SK-N-SH (cell line): ENCODE measurements at regions of chr14 and their contacts with region 1.

Region 1: GRCh38 chr14:30270200-30271161 is 288.5 kb upstream of the G2E3 start:
- DNase-seq: peak; percentile 54
- H3K4me3 ChIP-seq: peak overlapping the region; percentile 23 to 29; a peak in 2 of 4 replicates
- H3K27ac ChIP-seq: no peak overlapping the region
- H3K4me1 ChIP-seq: no peaks in the 10 kb centered on the region; a peak in 1 of 4 replicates
- H3K27me3 ChIP-seq: peaks cover 30% of the 10 kb centered on the region; the same call in 1 of the 2 replicates
- CTCF ChIP-seq: peak; percentile 87
- EP300 ChIP-seq: no peak
- RAD21 ChIP-seq: peak; percentile 57

Region 2: DNA sequence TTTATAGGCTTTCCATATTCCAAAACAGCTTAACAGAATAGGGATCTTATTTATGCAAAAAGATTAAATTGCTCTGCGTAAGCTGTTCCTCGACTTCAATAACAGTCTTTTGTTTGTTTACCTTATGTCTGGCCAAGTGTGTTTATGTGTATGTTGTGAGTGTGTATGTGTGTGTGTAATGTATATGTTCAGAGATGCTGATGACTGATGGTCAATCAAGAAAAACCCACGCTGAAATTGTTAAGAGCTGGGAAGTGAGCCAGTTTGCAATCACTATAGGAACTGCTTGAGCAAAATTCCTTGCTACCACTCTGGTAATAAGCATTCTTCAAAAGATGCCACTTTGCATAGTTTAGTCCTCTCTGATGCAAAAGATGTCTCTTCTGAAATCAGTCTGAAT is 402.5 kb before region 1 on chr14:
- CTCF ChIA-PET with region 1: no interaction called
- POLR2A ChIA-PET with region 1: no interaction called
- DNase-seq: no peak
- H3K4me3 ChIP-seq: no peak overlapping the region
- H3K27ac ChIP-seq: no peak overlapping the region
- H3K4me1 ChIP-seq: no peaks in the 10 kb centered on the region
- H3K27me3 ChIP-seq: no peaks in the 10 kb centered on the region
- CTCF ChIP-seq: no peak
- EP300 ChIP-seq: no peak
- RAD21 ChIP-seq: no peak

Region 3: DNA sequence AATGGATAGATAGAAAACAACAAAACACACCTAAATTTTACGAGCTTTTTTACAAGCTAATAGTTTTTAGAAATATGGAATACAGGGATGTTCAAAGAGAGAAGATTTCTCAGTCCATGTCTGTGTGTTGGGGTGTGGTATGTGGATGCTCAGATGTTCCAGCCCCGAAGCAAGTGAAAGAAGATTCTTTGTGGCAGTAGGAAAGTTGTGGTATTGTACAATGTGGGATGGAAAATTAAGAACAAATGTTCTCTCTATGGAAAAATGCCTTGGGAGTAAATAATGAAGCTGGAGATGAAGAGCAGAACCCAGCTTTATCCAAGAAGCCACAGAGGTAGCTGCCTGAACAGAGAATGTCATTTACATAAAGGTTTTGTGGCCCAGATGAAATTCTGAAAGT is 192.5 kb before region 1 on chr14:
- CTCF ChIA-PET with region 1: no interaction called
- POLR2A ChIA-PET with region 1: no interaction called
- DNase-seq: no peak
- H3K4me3 ChIP-seq: no peak overlapping the region
- H3K27ac ChIP-seq: no peak overlapping the region
- H3K4me1 ChIP-seq: no peaks in the 10 kb centered on the region
- H3K27me3 ChIP-seq: no peaks in the 10 kb centered on the region; the same call in 1 of the 2 replicates
- CTCF ChIP-seq: no peak
- EP300 ChIP-seq: no peak
- RAD21 ChIP-seq: no peak

Region 4: DNA sequence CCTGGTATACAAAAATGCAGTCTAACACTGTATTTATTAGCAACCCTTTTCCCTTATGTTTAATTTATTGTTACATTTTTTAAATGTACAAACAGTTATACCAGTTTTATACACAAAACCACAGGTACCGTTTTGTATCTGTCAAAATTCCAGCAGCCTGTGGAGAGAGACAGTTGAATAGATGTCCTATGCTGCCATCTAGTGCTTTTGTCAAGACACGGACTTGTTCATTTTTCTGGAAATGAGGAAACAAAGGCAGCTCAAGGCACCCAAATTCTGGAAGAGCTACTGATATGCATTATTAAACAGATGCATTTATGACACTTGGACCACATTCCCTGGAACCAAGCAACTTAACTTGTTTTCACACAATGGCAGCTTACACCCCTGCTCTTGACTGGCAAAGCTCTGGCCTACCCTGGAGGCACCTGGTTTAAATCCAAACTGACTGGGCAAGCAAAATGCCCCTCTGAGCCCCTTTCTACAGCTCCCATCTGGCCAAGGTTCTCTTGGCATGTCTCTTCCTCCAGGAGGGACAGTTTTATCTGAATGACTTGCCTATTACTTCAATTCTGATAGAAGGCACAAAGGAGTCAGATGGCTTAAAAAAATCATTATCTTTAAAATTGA is 55.9 kb before region 1 on chr14:
- CTCF ChIA-PET with region 1: interaction called, 11 read pairs
- POLR2A ChIA-PET with region 1: no interaction called
- DNase-seq: peak; percentile 3
- H3K4me3 ChIP-seq: no peak overlapping the region
- H3K27ac ChIP-seq: no peak overlapping the region
- H3K4me1 ChIP-seq: 0 out of 4 replicates have a peak, but pooled peaks cover 0 to 5% of the 10 kb centered on the region in 2 experiments
- H3K27me3 ChIP-seq: peaks cover 9% of the 10 kb centered on the region; the same call in 1 of the 2 replicates
- CTCF ChIP-seq: peak; percentile 84
- EP300 ChIP-seq: no peak
- RAD21 ChIP-seq: peak; percentile 85

Region 5: DNA sequence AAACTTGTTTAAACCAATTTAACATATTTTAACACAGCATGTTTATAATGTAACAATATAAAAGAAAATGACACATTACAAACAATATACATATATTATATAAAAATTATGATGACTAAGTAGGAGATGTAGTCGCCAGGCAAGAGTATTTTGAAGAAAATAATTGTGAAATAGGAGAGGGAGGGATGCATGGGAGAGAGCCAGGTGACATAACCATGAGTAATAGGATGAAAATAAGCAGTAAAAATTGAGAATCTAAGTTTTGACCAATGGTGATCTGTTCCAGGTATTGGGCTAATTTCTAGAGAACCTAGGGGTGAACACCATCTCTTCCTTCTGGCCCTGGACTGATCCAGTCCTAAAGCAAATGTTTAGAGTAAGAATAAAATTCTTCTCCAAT is 26.7 kb before region 1 on chr14:
- CTCF ChIA-PET with region 1: interaction called, 11 read pairs
- POLR2A ChIA-PET with region 1: no interaction called
- DNase-seq: no peak
- H3K4me3 ChIP-seq: no peak overlapping the region
- H3K27ac ChIP-seq: no peak overlapping the region
- H3K4me1 ChIP-seq: no peaks in the 10 kb centered on the region
- H3K27me3 ChIP-seq: no peaks in the 10 kb centered on the region; the same call in 1 of the 2 replicates
- CTCF ChIP-seq: no peak
- EP300 ChIP-seq: no peak
- RAD21 ChIP-seq: no peak

Region 6: GRCh38 chr14:30252783-30253674 is 17.5 kb before region 1 on chr14:
- CTCF ChIA-PET with region 1: interaction called, 42 read pairs
- POLR2A ChIA-PET with region 1: no interaction called
- DNase-seq: no peak
- H3K4me3 ChIP-seq: no peak overlapping the region
- H3K27ac ChIP-seq: no peak overlapping the region
- H3K4me1 ChIP-seq: no peaks in the 10 kb centered on the region
- H3K27me3 ChIP-seq: no peaks in the 10 kb centered on the region
- CTCF ChIP-seq: no peak
- EP300 ChIP-seq: no peak
- RAD21 ChIP-seq: no peak

Region 7: DNA sequence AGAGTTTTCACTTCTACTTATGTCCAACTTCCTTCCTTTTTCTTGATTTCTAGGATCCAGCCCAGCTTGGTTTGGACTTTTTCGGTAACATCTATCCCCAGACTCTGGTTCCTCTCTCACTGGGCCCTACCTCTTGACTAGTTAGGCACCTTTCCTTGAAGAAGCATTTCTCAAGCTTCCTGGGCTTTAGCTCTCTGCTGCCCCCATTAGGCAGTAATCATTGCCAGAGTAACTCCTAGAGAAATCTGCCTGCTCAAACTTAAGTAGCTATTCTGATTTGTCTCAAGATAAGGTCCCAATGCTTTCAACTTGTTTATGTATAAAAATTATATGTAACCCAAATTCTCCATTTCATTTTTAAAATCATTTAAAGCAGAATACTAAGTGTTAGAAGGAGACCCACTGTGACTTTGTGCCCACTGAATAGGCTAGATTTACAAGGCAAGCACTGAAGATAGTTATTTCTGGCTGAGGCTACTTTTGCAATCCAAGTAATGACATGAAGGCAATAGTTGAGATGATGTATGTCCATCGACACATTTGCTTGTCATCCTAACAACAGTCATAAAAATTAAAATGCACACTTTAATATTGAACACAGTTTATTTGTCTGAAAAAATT is 13.5 kb after region 1 on chr14:
- CTCF ChIA-PET with region 1: interaction called, 74 read pairs
- POLR2A ChIA-PET with region 1: no interaction called
- DNase-seq: peak; percentile 7
- H3K4me3 ChIP-seq: no peak overlapping the region
- H3K27ac ChIP-seq: no peak overlapping the region
- H3K4me1 ChIP-seq: no peaks in the 10 kb centered on the region
- H3K27me3 ChIP-seq: no peaks in the 10 kb centered on the region; the same call in 1 of the 2 replicates
- CTCF ChIP-seq: peak; percentile 77
- EP300 ChIP-seq: no peak
- RAD21 ChIP-seq: peak; percentile 24

Region 8: GRCh38 chr14:30317729-30318128 is 47.2 kb after region 1 on chr14:
- CTCF ChIA-PET with region 1: interaction called, 10 read pairs
- POLR2A ChIA-PET with region 1: no interaction called
- DNase-seq: no peak
- H3K4me3 ChIP-seq: no peak overlapping the region
- H3K27ac ChIP-seq: no peak overlapping the region
- H3K4me1 ChIP-seq: no peaks in the 10 kb centered on the region
- H3K27me3 ChIP-seq: peaks cover 13% of the 10 kb centered on the region
- CTCF ChIP-seq: no peak
- EP300 ChIP-seq: no peak
- RAD21 ChIP-seq: no peak